ENCODE measurements at regions of chr1 and their contacts with region 1.

Region 1: GRCh38 chr1:61463220-61463619 is 261.7 kb downstream of the TM2D1 start:
- DNase-seq: no peak
- ATAC-seq: no peak
- H3K4me3 ChIP-seq: no peak overlapping the region
- H3K27ac ChIP-seq: no peak overlapping the region
- H3K4me1 ChIP-seq: no peaks in the 10 kb centered on the region
- H3K27me3 ChIP-seq: no peaks in the 10 kb centered on the region
- CTCF ChIP-seq: no peak
- POLR2A ChIP-seq: no peak

Region 2: DNA sequence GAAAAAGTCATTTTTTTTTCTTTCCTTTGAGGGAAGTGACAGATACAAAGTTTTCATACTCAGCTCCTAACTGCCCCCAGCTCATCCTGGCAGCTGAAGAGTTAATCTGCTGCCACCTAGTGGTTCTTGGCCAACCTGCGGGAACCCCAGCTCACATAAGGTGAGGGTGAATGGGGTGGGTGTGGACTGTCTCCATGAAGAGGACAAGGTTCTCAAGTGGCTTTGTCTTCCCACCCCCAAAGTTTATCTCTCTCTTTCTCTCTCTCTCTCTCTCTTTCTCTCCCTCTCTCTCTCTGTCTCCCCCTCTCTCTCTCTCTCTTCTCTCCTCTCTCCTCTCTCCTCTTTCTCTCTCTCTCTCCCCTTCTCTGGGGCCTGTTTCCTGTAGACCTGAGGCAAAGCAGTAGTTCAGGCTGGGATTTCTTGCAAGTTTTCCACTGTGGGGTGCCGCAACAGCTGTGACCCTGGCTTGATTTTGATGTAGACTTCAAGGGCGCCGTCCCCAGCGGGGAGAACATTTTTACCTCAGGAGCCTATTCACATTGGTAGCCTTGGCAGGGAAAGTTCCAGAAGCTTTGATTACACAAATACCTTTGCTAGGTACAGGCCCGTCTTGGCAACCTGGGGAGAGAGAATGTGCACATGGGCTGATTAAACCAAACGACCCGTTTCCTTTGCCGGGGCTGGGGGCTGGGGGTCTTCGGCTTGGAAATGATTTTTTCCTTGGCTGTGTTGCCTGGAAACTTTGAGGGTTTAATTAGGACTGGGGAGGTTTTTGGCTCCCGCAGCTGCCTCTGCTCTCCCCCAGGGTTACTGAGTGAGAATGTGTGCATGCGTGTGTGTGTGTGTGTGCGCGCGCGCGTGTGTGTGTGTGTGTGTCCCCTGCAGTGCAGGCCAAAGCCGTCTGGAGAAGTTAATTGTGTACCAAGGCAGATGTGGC is 125.8 kb after region 1 on chr1:
- intact Hi-C with region 1: loop called in 2 of 10 experiments (anchors 10 kb)
- DNase-seq: peak; percentile 29 to 64 (median 48)
- ATAC-seq: peak; percentile 56 to 85 (median 80)
- H3K4me3 ChIP-seq: no peak overlapping the region
- H3K27ac ChIP-seq: peak overlapping the region in 1 of 12 donors; percentile 24
- H3K4me1 ChIP-seq: peaks cover 0 to 6% (median 0%) of the 10 kb centered on the region in 12 donors
- H3K27me3 ChIP-seq: no peaks in the 10 kb centered on the region
- CTCF ChIP-seq: peak; percentile 56 to 77 (median 66)
- POLR2A ChIP-seq: no peak

Region 3: GRCh38 chr1:61641578-61642336 is 178.5 kb after region 1 on chr1:
- intact Hi-C with region 1: loop called in 2 of 10 experiments (anchors 5 to 10 kb)
- DNase-seq: peak; percentile 76 to 88 (median 78)
- ATAC-seq: peak; percentile 71 to 90 (median 86)
- H3K4me3 ChIP-seq: peak overlapping the region in 8 of 12 donors; percentile 3 to 50 (median 41)
- H3K27ac ChIP-seq: peak overlapping the region in 11 of 12 donors; percentile 45 to 88 (median 77)
- H3K4me1 ChIP-seq: peaks cover 0 to 41% (median 10%) of the 10 kb centered on the region in 12 donors
- H3K27me3 ChIP-seq: no peaks in the 10 kb centered on the region
- CTCF ChIP-seq: peak; percentile 62 to 89 (median 76)
- POLR2A ChIP-seq: no peak

Region 4: DNA sequence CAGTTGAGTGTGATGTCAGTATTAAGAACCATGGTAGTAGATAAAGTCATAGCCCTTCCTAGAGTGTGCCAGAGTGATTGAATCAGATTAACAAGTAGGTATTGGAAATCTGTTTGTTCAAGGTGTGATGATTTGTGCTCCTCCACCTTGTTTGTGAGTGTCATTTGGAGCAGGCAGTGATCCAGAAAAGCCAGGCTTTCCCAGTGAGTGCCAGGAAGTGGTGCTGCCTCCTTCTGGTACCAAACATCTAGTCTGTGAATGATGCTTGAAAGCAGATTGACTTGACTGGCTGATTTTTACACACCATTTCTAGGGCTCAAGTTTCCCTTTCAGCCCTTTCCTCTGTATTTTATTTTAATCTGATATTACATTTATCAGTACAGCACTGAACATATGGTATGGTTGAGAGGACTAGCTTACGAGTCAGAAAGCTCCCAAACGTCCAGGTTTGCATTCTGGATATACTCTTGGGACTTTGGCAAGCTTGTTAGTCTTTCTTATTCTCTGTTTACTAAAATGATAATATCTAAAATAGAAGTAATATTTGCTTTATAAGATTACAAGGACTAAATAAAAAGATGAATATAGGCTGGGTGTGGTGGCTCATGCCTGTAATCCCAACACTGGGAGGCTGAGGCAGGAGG is 379.8 kb after region 1 on chr1:
- intact Hi-C with region 1: loop called in 1 of 10 experiments (anchors 10 kb)
- DNase-seq: no peak
- ATAC-seq: no peak
- H3K4me3 ChIP-seq: no peak overlapping the region
- H3K27ac ChIP-seq: no peak overlapping the region
- H3K4me1 ChIP-seq: peaks cover 0 to 14% (median 5%) of the 10 kb centered on the region in 12 donors
- H3K27me3 ChIP-seq: no peaks in the 10 kb centered on the region
- CTCF ChIP-seq: peak in 5 of 12 donors; percentile 12 to 41 (median 18)
- POLR2A ChIP-seq: no peak